ENCODE measurements at regions of chr6 and their contacts with region 1.

Region 1: DNA sequence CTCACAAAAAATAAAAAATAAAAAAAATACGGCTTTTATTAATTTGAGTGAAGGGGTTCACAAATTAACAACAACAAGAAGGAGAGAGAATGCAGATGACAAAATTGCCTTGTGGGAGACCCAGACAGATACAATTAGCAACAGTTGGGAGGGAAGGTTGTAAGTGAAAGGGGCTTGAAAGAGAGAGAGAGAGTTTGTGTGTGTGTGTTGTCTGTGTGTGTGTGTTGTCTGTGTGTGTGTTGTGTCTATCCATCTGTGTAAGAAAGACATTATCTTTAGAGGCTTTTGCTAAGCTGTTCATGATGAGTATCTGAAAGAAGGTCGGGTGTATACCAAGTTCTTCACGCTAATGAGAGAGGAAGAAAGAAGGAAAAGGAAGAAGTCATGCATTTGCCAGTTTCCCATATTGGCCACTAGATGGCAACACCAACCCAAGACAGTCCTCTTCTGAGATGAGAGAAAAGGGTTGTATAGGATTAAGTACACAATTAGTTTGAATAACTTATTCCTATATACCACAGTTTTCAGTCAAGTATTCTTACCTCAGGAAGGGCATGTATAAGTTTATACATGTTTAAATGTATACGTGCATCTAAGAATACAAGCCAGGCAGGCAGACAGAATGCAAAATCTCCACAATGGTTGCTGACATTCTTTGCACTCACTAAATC is 63.7 kb upstream of the CD2AP start:
- DNase-seq: peak; percentile 63
- H3K4me3 ChIP-seq: no peak overlapping the region
- CTCF ChIP-seq: peak; percentile 90

Region 2: DNA sequence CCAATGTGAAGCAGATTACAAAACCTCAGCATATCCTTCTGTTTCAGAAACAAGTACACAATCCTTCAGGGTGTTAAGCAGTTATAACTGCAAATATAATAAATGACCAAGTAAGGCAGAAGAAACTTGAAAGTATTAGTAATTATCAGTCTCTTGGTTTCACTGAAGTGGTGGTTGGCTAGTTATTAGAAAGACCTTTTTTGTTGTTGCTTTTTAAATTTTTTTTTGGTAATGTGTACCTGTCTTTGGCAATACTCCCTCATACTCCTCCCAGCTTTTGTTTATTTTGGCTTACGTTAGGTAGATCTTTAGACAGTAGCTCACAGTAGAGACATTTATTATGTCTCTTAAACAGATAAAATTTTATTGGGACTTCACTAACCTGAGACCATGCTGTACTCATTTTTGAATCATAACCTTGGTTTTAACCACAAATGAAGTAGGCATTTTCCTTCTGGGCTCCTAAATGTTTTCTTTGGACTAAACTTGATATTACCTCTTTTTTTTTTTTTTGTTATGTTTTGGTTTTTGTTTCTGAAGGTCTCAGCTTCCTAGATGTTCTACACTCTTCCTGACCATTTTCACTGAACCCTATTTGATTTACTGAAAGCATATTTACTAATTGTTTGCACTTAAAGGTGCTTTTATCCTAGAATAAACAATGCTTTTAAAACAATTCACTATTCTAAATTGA is 70.1 kb after region 1 on chr6:
- in situ Hi-C with region 1: no loop called
- DNase-seq: peak; percentile 50
- H3K4me3 ChIP-seq: no peak overlapping the region
- CTCF ChIP-seq: no peak

Region 3: DNA sequence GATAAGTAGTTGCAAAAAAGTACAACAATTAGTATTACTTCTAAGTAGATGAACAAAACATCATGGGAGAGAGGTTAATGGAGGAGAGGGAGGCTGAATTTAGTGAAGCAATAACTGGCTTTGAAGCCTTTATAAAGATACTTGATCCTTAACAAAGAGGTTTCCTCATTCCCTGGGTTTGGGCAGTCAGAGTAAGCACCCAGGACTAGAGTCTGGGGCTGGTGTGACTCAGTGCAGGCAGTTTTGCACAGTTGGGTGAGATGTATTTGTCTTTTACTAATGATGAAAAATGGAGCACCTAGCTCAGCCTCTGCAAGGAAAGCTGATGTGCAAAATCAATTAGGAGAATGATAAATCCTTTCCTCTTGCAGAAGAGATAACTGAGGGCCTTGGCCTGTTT is 356.1 kb after region 1 on chr6:
- in situ Hi-C with region 1: loop called (anchors 5 kb)
- DNase-seq: no peak
- H3K4me3 ChIP-seq: no peak overlapping the region
- CTCF ChIP-seq: no peak

Measured in astrocyte of the cerebellum (primary cell).